Heart left ventricle (tissue), 16 donors: ENCODE measurements at regions of chr5 and their contacts with region 1.

Region 1: GRCh38 chr5:156326718-156327259 is at the start of gene SGCD:
- DNase-seq: peak; percentile 70 to 88 (median 82)
- ATAC-seq: peak; percentile 83 to 93 (median 90)
- H3K4me3 ChIP-seq: peak within 1 kb of the TSS; percentile 3 to 71 (median 56)
- H3K27ac ChIP-seq: peak within 1 kb of the TSS; percentile 55 to 90 (median 78)
- H3K4me1 ChIP-seq: peaks cover 0 to 40% (median 9%) of the 10 kb centered on the region in 12 donors
- H3K27me3 ChIP-seq: no peaks in the 10 kb centered on the region
- CTCF ChIP-seq: peak in 1 of 12 donors; percentile 21
- POLR2A ChIP-seq: peak in 1 of 2 donors; percentile 59
- total RNA-seq, gene SGCD: 59.3 to 150 (median 90.3) TPM

Region 2: GRCh38 chr5:155728146-155728856 is 598.5 kb before region 1 on chr5:
- intact Hi-C with region 1: loop called in 1 of 10 experiments (anchors 5 kb)
- DNase-seq: peak; percentile 44 to 79 (median 70)
- ATAC-seq: peak; percentile 57 to 83 (median 75)
- H3K4me3 ChIP-seq: peak overlapping the region; percentile 5 to 64 (median 59)
- H3K27ac ChIP-seq: peak overlapping the region in 11 of 12 donors; percentile 72 to 89 (median 85)
- H3K4me1 ChIP-seq: peaks cover 0 to 28% (median 6%) of the 10 kb centered on the region in 12 donors
- H3K27me3 ChIP-seq: peaks cover 0 to 49% (median 16%) of the 10 kb centered on the region in 9 donors
- CTCF ChIP-seq: peak in 6 of 12 donors; percentile 11 to 49 (median 28)
- POLR2A ChIP-seq: no peak

Region 3: DNA sequence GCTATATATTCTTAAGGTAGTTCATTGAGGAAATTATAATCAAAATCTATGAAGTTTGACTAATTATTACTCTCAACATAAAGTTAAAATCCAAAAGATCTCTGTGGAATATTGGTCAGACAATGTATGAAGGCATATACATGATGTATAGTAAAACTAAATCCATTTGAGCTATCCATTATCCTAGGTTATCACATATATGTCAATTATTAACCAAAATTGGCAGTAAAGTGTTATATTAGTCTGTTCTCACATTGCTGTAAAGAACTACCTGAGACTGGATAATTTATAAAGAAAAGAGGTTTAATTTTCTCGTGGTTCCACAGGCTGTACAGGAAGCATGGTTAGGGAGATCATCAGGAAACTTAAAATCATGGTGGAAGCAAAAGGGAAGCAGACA is 511.5 kb before region 1 on chr5:
- intact Hi-C with region 1: no loop called
- DNase-seq: no peak
- ATAC-seq: no peak
- H3K4me3 ChIP-seq: no peak overlapping the region
- H3K27ac ChIP-seq: no peak overlapping the region
- H3K4me1 ChIP-seq: peaks cover 0 to 8% (median 0%) of the 10 kb centered on the region in 12 donors
- H3K27me3 ChIP-seq: no peaks in the 10 kb centered on the region
- CTCF ChIP-seq: no peak
- POLR2A ChIP-seq: no peak

Region 4: GRCh38 chr5:155954701-155955445 is 371.9 kb before region 1 on chr5:
- intact Hi-C with region 1: loop called in 2 of 10 experiments (anchors 5 to 10 kb)
- DNase-seq: no peak
- ATAC-seq: no peak
- H3K4me3 ChIP-seq: no peak overlapping the region
- H3K27ac ChIP-seq: no peak overlapping the region
- H3K4me1 ChIP-seq: peaks cover 0 to 28% (median 8%) of the 10 kb centered on the region in 12 donors
- H3K27me3 ChIP-seq: no peaks in the 10 kb centered on the region
- CTCF ChIP-seq: no peak
- POLR2A ChIP-seq: no peak

Region 5: GRCh38 chr5:156178117-156178516 is 148.7 kb before region 1 on chr5:
- intact Hi-C with region 1: loop called in 1 of 10 experiments (anchors 2 kb)
- DNase-seq: peak in 1 of 5 donors; percentile 20
- ATAC-seq: peak; percentile 77 to 81 (median 80)
- H3K4me3 ChIP-seq: no peak overlapping the region
- H3K27ac ChIP-seq: peak overlapping the region in 6 of 12 donors; percentile 53 to 69 (median 62)
- H3K4me1 ChIP-seq: peaks cover 0 to 4% (median 0%) of the 10 kb centered on the region in 12 donors
- H3K27me3 ChIP-seq: no peaks in the 10 kb centered on the region
- CTCF ChIP-seq: no peak
- POLR2A ChIP-seq: no peak

Region 6: GRCh38 chr5:156460471-156460870 is 133.7 kb after region 1 on chr5:
- intact Hi-C with region 1: no loop called
- DNase-seq: no peak
- ATAC-seq: no peak
- H3K4me3 ChIP-seq: no peak overlapping the region
- H3K27ac ChIP-seq: no peak overlapping the region
- H3K4me1 ChIP-seq: peaks cover 0 to 4% (median 0%) of the 10 kb centered on the region in 12 donors
- H3K27me3 ChIP-seq: no peaks in the 10 kb centered on the region
- CTCF ChIP-seq: no peak
- POLR2A ChIP-seq: no peak

Region 7: DNA sequence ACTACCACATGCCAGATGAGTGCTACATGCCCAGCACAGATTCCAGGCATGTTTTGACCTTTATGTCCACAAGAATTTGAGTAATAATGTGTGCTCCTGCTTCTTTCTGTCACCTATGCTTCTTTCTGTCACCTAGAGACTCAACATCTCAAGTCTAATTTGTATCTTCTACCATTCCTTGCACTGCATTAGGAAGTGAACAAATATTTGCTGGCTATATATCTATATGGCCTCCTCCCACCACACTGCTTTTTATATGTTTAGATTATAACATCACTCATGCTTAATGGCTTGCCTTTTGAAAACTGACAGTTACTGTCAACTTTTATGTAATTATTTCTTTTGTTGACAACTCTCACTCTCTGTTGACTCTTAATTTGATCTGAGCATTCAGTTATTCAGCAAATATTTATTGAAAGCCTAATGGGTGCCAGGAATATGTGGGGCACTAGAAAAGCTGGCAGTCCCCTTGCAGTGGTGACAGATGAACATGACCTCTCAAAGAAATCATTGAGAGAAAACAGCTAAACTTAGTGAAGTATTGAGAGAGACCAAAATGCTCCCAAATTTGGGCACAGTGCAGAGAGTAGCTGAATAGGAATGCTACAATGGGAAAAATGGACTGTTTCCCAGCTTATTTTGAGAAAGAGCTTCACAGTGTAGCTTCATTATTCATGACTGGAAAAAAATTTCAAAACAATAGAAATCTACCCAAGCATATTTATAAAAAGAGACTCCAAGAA is 257.9 kb after region 1 on chr5:
- intact Hi-C with region 1: loop called in 2 of 10 experiments (anchors 5 to 10 kb)
- DNase-seq: peak in 2 of 5 donors; percentile 31 to 35
- ATAC-seq: peak; percentile 34 to 77 (median 47)
- H3K4me3 ChIP-seq: no peak overlapping the region
- H3K27ac ChIP-seq: peak overlapping the region; percentile 45 to 89 (median 82)
- H3K4me1 ChIP-seq: peaks cover 0 to 64% (median 11%) of the 10 kb centered on the region in 12 donors
- H3K27me3 ChIP-seq: no peaks in the 10 kb centered on the region
- CTCF ChIP-seq: no peak
- POLR2A ChIP-seq: no peak

Region 8: DNA sequence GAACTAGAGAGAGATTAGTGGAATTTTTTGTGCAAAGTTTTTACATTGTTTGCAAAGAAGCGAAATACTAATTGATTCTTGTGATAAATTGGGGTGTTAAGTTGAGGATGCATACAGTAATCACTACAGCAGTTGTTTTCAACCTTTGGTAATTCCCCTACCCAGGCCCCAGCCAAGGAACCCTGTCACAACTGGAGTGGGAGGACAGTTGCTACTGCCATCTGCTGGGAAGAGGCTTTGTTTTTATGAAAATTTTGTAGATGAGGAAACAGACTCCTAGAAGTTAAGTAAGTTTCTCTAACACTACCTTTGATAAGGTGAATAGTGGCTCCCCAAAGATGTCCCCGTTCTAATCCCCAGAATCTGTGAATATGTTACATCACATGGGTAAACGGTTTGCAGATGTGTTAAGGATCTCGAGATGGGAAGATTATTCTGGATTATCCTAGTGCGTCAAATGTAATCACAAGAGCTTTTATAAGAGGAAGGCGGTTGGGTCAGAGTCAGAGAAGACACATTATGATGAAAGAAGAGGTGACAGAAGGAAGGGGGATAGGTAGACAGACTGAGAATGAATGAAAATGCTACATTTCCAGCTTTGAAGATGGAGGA is 489.3 kb after region 1 on chr5:
- intact Hi-C with region 1: loop called in 1 of 10 experiments (anchors 10 kb)
- DNase-seq: peak in 3 of 5 donors; percentile 11 to 61 (median 30)
- ATAC-seq: peak in 3 of 4 donors; percentile 44 to 71 (median 51)
- H3K4me3 ChIP-seq: no peak overlapping the region
- H3K27ac ChIP-seq: no peak overlapping the region
- H3K4me1 ChIP-seq: no peaks in the 10 kb centered on the region
- H3K27me3 ChIP-seq: no peaks in the 10 kb centered on the region
- CTCF ChIP-seq: peak in 11 of 12 donors; percentile 13 to 61 (median 45)
- POLR2A ChIP-seq: no peak